Activated CD8-positive, alpha-beta T cell treated with anti-CD3 and anti-CD28 coated beads, Interleukin-2, amount 10 ng/mL, durations not matched to agents 7 days and 5 days (primary cell): ENCODE measurements at regions of chr22 and their contacts with region 1.

Region 1: GRCh38 chr22:35409783-35410662 is 10.1 kb downstream of the MCM5 start:
- DNase-seq: peak; percentile 41
- ATAC-seq: peak; percentile 58
- H3K4me3 Mint-ChIP-seq: no peak overlapping the region
- H3K27ac Mint-ChIP-seq: peak overlapping the region; percentile 85
- H3K4me1 Mint-ChIP-seq: peaks cover 35% of the 10 kb centered on the region
- H3K27me3 Mint-ChIP-seq: no peaks in the 10 kb centered on the region

Region 2: GRCh38 chr22:35399678-35400334 is 10.2 kb before region 1 on chr22 and contains the start of gene MCM5:
- CTCF ChIA-PET with region 1: no interaction called
- POLR2A ChIA-PET with region 1: interaction called, 12 read pairs
- DNase-seq: peak; percentile 99
- ATAC-seq: peak; percentile 100
- H3K4me3 Mint-ChIP-seq: peak within 1 kb of the TSS; percentile 99
- H3K27ac Mint-ChIP-seq: peak within 1 kb of the TSS; percentile 99
- H3K4me1 Mint-ChIP-seq: peaks cover 49% of the 10 kb centered on the region
- H3K27me3 Mint-ChIP-seq: no peaks in the 10 kb centered on the region
- total RNA-seq, gene MCM5: 275 to 287 TPM

Region 3: DNA sequence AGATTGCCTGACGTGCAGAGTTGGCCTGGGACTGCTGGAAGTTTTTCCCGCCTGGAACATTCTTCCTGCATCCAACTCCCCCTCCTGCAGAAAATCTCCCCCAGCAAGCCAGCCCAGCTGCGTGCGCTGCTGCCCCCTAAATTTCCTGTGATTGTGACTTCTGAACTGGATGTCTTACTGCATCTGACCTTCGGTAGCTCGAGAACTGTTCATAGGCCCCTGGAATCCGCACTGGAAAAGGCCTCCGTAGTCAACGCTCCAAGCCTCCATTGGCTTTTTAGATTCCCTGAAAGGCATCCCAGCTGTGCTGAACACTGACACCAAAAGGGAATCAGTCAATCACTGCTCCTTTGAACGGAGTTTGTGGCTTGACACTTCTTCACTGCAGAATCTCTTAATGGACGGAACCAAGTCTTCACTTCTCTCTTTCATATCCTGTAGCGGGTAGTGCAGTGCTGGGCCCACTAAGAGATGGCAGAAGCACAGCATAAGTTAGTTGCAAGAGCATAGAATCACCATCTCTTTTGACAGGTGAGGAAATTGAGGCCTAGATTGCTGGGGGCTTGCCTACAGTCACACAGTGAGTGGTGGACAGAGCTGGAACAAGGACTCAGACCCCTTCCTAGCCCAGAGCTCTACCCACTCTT is 116.4 kb after region 1 on chr22:
- CTCF ChIA-PET with region 1: no interaction called
- POLR2A ChIA-PET with region 1: no interaction called
- DNase-seq: no peak
- ATAC-seq: no peak
- H3K4me3 Mint-ChIP-seq: no peak overlapping the region
- H3K27ac Mint-ChIP-seq: no peak overlapping the region
- H3K4me1 Mint-ChIP-seq: no peaks in the 10 kb centered on the region
- H3K27me3 Mint-ChIP-seq: peaks cover 11% of the 10 kb centered on the region

Region 4: DNA sequence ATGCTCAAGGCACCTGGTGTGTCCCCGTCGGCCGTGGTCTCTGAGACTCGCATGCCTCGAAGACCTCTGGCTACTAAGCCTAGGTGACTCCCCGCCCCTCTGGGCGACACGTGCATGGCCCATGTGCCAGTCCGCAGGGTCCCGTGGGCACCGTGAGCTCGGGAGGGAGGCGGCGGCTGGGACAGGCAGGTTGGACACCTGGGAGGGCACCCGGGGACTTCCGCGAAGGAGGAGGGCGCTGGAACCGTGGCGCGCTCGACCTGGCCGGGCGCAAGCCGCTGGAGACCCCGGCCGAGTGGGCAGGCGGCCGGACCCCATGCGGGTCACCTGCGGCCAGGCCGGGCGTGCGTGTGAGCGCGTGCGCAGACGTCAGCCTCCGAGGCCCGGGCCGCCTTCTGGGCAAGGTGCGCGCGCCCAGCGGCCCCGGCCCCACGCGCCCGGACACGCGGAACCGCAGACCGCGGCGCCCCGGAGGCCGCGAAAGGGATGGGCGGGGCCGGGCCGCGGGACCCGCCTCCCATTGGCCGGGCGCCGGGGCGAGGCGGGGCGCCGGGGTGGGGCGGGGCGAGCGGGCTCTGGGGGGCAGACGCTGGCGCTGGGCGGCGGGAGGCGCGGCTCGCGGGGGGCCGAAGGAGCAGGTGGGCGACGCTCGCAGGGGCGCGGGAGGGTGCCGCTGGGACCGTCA is 130.0 kb after region 1 on chr22:
- CTCF ChIA-PET with region 1: no interaction called
- POLR2A ChIA-PET with region 1: no interaction called
- DNase-seq: peak; percentile 71
- ATAC-seq: peak; percentile 89
- H3K4me3 Mint-ChIP-seq: peak overlapping the region; percentile 64
- H3K27ac Mint-ChIP-seq: no peak overlapping the region
- H3K4me1 Mint-ChIP-seq: peaks cover 5% of the 10 kb centered on the region
- H3K27me3 Mint-ChIP-seq: peaks cover 28% of the 10 kb centered on the region